Gastrocnemius medialis (tissue), 4 donors: ENCODE measurements at regions of chr10 and their contacts with region 1.

Region 1: DNA sequence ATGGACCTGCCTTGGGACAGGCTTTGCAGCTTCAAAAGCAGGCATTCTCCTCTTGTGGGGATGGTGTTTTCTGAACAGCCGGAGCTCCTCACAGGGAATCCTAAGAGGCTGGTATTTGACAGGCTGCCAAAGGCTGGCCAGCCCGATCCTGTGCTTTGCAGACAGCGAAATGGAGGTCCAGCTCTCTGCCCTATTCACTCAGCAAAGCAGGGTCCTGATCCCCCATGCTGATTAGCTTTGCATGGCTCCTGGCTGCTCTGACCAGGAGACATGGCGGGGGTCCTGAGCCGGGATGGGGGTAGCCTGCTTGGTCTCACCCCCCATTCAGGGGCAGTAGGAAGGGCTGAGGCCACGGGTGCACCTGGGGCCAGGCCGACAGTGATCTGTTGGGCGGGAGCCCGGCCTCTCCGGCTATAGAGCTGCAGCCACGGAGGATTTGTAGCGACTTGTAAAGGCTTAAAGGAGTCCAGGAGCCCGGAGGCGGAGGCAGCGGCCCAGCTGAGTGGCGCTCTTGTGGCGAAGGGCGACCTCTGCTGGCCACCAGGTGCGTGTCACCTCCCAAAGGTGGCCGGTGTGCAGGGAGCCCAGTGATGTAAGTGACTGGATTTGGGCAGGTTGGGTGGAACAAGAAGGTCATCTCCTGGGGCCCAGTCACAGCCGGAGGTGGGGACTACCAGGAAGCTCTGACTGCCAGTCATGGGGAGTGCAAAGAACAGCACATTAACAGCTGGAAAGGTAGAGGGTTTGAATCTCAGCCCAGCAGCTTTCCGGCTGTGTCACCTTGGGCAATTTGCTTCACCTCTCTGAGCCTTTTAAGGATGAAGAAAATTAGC is 126.5 kb downstream of the ZMIZ1 start:
- DNase-seq: peak; percentile 77 to 86
- ATAC-seq: peak; percentile 77 to 86
- H3K4me3 ChIP-seq: no peak overlapping the region
- H3K27ac ChIP-seq: peak overlapping the region; percentile 51 to 76 (median 57)
- H3K4me1 ChIP-seq: peaks cover 25 to 31% of the 10 kb centered on the region in 2 donors
- H3K27me3 ChIP-seq: no peaks in the 10 kb centered on the region
- CTCF ChIP-seq: peak; percentile 90 to 96 (median 96)
- POLR2A ChIP-seq: no peak

Region 2: DNA sequence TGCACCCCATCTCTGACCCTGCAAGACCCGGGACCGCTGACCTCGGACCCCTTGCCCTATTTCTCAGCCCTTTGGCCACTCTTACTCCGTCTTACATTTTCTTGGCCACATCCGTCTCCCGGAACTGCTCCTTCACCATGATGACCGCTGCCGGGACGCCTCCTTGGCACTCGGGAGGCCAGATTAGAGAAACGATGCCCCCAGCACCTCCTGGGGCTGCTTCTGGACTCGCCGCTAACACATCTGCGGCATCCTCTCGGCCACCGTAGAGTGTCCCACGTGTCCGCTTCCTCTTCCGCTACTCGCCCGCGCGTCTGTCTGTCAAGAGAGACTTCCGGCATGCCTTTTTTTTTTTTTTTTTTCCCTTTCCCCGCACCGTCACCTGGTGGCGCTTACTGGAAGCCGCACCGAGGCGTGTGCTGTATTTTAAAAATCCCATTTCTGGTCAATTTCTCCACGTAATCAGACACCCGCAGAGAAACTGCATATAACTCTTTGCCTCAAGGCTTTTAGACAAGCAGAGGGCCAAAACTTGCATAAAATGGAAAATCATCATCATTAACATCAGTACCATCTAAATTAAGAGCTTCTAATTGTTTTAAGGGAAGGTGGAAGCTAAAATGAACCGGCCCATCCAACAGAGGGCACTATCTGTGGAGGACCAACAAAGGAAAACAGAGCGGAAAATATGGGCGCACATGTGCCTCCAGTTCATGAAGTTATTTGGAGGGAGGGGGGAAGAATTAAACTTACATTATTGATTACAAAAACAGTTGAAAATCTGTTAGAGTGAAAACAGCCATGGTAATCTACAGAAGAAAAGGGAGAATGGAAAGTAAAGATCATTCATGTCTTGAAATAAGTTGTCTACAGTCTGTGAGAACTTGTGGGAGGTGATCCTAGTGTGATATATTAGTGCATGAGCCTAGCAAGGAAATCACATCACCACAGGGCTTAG is 1165.8 kb before region 1 on chr10 and contains the start of gene POLR3A:
- in situ Hi-C with region 1: loop called in 1 of 4 experiments (anchors 25 kb)
- intact Hi-C with region 1: no loop called
- DNase-seq: peak; percentile 94 to 97
- ATAC-seq: peak; percentile 73 to 75
- H3K4me3 ChIP-seq: peak within 1 kb of the TSS; percentile 95 to 99 (median 97)
- H3K27ac ChIP-seq: peak within 1 kb of the TSS; percentile 79 to 87 (median 84)
- H3K4me1 ChIP-seq: peaks cover 23 to 28% of the 10 kb centered on the region in 2 donors
- H3K27me3 ChIP-seq: no peaks in the 10 kb centered on the region
- CTCF ChIP-seq: peak; percentile 69 to 86 (median 73)
- POLR2A ChIP-seq: peak; percentile 46 to 62
- total RNA-seq, gene POLR3A: 11.0 to 17.4 (median 15.5) TPM

Region 3: DNA sequence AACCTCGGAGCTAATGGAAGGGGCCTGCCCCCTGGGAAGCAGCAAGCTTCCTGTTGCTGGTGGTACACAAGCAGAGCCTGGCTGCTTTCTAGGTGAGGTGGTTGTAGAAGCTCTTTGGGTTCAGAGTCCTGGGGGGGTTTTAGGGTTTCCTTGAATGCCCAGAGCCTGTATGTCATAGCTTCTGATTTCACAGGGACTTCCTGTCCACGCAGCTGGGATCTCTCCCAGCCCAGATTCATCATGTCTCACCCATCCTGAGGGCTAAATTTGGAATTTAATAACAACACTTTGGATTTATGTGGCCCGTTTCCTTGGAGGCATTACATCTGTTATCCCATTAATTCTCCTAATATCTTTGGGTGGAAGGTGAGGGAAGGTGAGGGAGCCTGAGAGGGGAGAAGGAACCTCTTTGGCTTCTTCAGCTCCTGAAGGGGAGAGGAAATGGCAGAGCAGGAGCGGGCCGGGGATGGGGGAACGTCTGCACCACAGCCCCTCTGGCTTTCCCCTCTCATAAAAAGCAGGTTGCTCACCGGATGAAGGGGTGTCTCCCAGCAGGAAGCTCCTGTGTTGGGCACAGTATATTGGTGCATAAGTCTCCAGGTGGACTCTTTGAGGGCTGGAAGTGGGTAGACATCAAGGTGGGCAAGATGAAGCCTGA is 1142.0 kb before region 1 on chr10:
- in situ Hi-C with region 1: loop called (anchors 10 to 25 kb)
- intact Hi-C with region 1: loop called (anchors 5 kb)
- DNase-seq: no peak
- ATAC-seq: no peak
- H3K4me3 ChIP-seq: no peak overlapping the region
- H3K27ac ChIP-seq: no peak overlapping the region
- H3K4me1 ChIP-seq: no peaks in the 10 kb centered on the region
- H3K27me3 ChIP-seq: no peaks in the 10 kb centered on the region
- CTCF ChIP-seq: no peak
- POLR2A ChIP-seq: no peak

Region 4: DNA sequence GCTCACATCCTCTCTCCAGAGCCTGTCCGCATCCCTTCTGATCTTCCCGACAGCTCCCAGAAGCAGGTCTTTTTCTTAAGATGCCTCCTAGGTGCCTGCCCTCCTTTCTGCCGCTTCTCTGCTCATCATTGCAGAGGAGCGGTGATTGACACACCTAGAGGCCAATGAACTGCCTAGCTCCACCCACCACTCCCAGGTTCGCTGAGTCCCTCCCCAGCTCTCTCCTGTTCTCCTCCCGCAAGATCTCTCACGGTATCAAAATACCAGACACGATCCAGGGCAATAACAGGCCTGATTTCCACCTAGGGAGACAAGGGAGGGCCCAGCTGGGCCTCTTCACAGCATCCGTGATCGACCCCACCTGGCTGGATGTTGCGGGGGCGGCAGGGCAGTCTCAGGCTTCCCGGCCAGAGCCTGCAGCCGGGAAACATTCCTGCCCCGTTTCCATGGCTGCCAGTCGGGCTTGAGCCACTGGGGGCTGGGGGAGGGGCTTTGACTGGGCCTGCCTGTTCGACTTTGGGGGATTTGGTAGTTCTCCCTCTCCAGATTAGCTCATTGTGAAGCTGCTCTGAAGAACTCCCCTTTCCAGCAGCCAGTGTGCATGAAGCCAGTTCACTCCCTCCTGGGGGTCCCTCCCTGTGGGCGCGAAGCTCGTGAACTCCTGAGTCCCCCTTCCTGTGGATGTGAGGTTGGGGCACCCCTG is 788.1 kb before region 1 on chr10:
- in situ Hi-C with region 1: loop called in 1 of 4 experiments (anchors 25 kb)
- intact Hi-C with region 1: no loop called
- DNase-seq: peak in 1 of 2 donors; percentile 41
- ATAC-seq: peak in 1 of 2 donors; percentile 34
- H3K4me3 ChIP-seq: no peak overlapping the region
- H3K27ac ChIP-seq: no peak overlapping the region
- H3K4me1 ChIP-seq: peaks cover 3 to 11% of the 10 kb centered on the region in 2 donors
- H3K27me3 ChIP-seq: peaks cover 0 to 3% (median 0%) of the 10 kb centered on the region in 3 donors
- CTCF ChIP-seq: no peak
- POLR2A ChIP-seq: no peak

Region 5: DNA sequence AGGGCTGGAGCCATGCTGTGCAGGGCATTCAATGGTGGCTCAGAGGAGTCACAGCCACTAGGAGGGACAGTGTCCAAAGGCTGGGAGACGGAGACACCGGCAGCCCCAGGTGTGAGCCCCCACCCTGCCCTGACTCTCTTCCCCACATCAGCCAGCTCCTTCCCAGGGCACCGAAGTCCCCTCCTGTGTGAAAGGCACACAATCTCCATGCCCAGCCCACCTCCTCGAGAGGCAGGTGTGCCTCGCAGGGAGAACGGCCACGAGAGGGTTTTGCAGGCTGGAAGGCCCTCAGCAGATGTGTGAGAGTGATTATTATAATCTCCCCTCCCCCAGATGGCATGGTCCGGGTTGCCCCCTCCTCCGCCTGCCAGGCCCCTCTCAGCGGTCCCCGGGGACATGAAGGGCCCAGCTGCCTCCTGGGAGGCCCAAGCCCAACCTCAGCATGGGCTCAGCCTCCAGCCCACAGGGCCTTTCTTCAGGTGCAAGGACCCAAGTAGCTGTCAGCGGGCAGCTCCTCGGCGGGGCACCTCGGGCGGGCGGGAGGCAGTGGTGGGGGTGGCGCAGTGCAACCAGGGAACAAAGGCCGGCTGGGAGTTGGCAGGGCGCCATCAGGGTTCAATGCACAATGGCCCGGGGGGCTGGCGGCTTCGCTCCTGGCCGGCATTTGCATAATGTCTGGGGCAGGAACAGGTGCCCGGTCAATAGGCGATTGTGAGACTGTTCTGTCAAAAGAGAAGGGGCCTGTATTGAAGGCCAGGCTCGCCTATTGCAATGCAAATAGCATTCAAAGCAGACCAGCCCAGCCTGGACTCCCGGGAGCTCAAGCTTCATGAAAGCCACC is 281.9 kb before region 1 on chr10:
- in situ Hi-C with region 1: no loop called
- intact Hi-C with region 1: loop called (anchors 5 kb)
- DNase-seq: no peak
- ATAC-seq: no peak
- H3K4me3 ChIP-seq: no peak overlapping the region
- H3K27ac ChIP-seq: no peak overlapping the region
- H3K4me1 ChIP-seq: peaks cover 3 to 7% of the 10 kb centered on the region in 2 donors
- H3K27me3 ChIP-seq: no peaks in the 10 kb centered on the region
- CTCF ChIP-seq: no peak
- POLR2A ChIP-seq: no peak

Region 6: DNA sequence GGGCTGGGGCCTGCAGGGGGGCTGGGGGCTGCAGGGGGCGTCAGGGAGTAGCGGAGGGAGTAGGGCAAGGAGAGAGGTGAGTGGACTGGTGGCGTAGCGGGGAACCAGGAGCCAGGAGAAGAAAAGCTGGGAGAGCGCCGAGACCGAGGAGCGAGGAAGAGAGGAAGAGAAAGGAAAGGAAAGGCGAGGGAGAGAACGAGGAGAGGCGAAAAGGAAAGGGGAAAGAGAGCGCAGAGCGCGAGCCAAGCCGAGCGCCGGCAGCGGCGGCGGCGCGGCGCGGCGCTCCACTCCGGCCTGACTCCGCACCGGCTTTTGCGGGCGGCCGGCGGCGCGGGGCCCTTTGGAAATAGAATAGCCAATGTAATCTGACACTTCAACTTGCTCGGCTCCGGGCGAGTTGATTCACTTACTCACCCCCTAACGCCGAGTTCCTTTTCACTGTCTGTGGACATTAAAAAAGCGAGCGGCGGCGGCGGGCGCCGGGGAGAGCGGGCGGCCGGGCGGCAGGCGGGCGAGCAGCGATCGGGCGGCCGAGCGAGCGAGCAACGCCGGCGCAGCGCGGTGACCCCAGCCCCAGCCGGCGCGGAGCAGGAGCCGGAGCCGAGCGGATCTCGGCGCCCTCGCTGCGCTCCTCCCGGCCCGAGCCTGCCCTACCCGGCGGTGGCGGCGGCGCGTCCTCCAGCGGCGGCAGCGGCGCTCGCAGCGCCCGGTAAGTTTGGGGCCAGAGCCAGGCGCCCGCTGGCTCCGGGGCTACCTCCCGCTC is 126.6 kb before region 1 on chr10 and contains the start of gene ZMIZ1:
- in situ Hi-C with region 1: no loop called
- intact Hi-C with region 1: loop called (anchors 1 kb)
- DNase-seq: peak; percentile 89 to 91
- ATAC-seq: peak; percentile 62 to 67
- H3K4me3 ChIP-seq: peak within 1 kb of the TSS; percentile 71 to 98 (median 84)
- H3K27ac ChIP-seq: peak within 1 kb of the TSS; percentile 93 to 100 (median 98)
- H3K4me1 ChIP-seq: peaks cover 25 to 29% of the 10 kb centered on the region in 2 donors
- H3K27me3 ChIP-seq: no peaks in the 10 kb centered on the region
- CTCF ChIP-seq: peak in 3 of 5 experiments; percentile 20 to 49 (median 38)
- POLR2A ChIP-seq: peak; percentile 97
- total RNA-seq, gene ZMIZ1: 22.7 to 37.5 (median 31.7) TPM

Region 7: DNA sequence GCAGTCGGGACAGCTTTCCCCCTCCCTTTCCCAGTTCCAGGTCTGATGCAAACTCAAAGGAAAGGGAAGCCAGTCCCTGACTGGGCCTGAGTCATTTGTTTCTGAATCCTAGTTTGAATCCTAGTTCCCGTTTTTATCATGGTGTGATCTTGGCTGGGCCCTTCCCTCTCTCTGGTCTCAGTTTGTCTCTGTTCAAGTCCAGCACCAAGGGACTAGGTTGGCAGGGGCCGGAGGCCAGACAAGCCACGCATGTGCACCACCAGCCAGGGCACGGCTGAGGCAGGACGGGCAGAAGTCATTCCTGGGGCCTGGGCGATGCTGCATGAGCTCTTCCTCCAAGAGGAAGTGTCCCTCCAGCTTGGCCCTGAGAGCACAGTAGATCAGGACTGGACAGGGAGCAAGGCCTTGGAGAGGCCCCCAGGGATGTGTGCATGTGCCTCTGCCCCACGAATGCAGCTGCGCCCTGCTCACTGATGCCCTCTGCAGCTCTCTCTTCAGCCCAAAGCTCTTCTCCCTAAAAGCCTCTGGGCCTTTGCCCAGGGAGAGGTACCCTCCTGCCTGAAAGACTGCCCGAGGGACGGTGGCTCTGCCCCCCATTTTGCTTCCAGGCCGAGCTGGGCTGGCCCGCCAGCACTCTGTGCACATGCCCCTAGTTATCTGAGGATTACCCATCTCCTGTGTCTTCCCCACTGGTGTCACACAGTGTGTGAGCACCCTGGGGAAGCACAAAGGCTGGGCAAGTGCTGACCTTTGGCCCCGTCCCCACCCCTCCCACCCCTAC is 39.8 kb before region 1 on chr10:
- in situ Hi-C with region 1: no loop called
- intact Hi-C with region 1: loop called (anchors 5 kb)
- DNase-seq: no peak
- ATAC-seq: no peak
- H3K4me3 ChIP-seq: no peak overlapping the region
- H3K27ac ChIP-seq: peak overlapping the region; percentile 86 to 92 (median 88)
- H3K4me1 ChIP-seq: peaks cover 80 to 100% of the 10 kb centered on the region in 2 donors
- H3K27me3 ChIP-seq: no peaks in the 10 kb centered on the region
- CTCF ChIP-seq: no peak
- POLR2A ChIP-seq: no peak